CD4-positive, alpha-beta T cell (primary cell): ENCODE measurements at regions of chr6 and their contacts with region 1.

Region 1: DNA sequence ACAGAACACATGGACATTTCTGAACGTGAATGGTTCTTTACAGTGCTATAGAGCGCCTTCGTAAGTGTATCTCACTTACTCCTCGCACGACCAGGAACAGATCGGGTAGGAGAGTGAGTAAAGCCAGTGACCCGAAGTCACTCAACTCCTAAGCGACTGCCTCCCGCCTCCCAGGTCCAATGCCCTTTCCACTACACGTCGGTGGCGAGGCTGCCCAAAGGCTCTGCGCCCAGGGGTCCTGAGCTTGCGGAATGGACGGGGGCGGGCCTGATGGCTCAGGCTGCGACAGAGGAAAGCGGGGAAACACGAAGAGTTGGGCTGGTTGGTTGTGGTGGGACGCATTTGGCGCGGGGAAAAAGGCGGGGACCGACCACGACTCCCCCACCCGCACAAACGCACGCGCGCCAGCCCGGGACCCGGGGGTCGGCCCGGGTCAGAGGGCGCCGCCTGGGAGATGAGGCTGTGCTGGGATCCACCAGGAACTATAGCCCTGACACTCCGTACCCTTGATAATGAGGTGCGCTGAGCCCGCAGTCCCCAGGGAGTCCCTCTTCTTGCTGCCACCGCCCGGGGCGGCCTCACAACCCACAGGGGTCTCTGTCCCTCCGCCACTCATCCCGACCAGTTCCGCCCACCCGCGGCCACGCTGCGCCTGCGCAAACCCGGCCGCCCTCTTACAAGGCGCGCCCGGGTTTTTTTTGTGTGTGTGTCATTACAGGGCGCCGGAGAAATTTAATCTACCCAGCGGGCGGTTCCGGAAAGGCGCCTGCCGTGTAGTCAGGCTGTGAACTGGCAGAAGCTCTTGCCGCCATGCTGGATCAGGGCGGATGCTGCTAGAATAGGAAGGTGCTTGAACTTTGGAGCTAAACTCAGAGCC is at the start of gene BLOC1S5:
- DNase-seq: peak; percentile 89 to 98 (median 94)
- ATAC-seq: peak; percentile 96
- H3K4me3 ChIP-seq: peak within 1 kb of the TSS; percentile 88
- H3K4me3 Mint-ChIP-seq: peak within 1 kb of the TSS; percentile 93
- H3K27ac ChIP-seq: peak within 1 kb of the TSS; percentile 77 to 88
- H3K27ac Mint-ChIP-seq: peak within 1 kb of the TSS; percentile 90
- H3K4me1 ChIP-seq: peaks cover 20% of the 10 kb centered on the region
- H3K4me1 Mint-ChIP-seq: peaks cover 37% of the 10 kb centered on the region
- H3K27me3 ChIP-seq: no peaks in the 10 kb centered on the region
- H3K27me3 Mint-ChIP-seq: no peaks in the 10 kb centered on the region
- CTCF ChIP-seq: no peak
- total RNA-seq, gene BLOC1S5: 5.7 to 7.2 TPM

Region 2: GRCh38 chr6:7312616-7313504 is 751.1 kb before region 1 on chr6 and contains the start of gene SSR1:
- CTCF ChIA-PET with region 1: no interaction called
- POLR2A ChIA-PET with region 1: no interaction called
- intact Hi-C with region 1: loop called in 1 of 2 experiments (anchors 5 kb)
- DNase-seq: peak; percentile 77 to 96 (median 90)
- ATAC-seq: peak; percentile 95
- H3K4me3 ChIP-seq: peak within 1 kb of the TSS; percentile 94
- H3K4me3 Mint-ChIP-seq: peak within 1 kb of the TSS; percentile 95
- H3K27ac ChIP-seq: peak within 1 kb of the TSS; percentile 74 to 75
- H3K27ac Mint-ChIP-seq: peak within 1 kb of the TSS; percentile 86
- H3K4me1 ChIP-seq: peaks cover 20% of the 10 kb centered on the region
- H3K4me1 Mint-ChIP-seq: peaks cover 53% of the 10 kb centered on the region
- H3K27me3 ChIP-seq: no peaks in the 10 kb centered on the region
- H3K27me3 Mint-ChIP-seq: no peaks in the 10 kb centered on the region
- CTCF ChIP-seq: no peak
- total RNA-seq, gene SSR1: 49.6 to 55.1 TPM

Region 3: DNA sequence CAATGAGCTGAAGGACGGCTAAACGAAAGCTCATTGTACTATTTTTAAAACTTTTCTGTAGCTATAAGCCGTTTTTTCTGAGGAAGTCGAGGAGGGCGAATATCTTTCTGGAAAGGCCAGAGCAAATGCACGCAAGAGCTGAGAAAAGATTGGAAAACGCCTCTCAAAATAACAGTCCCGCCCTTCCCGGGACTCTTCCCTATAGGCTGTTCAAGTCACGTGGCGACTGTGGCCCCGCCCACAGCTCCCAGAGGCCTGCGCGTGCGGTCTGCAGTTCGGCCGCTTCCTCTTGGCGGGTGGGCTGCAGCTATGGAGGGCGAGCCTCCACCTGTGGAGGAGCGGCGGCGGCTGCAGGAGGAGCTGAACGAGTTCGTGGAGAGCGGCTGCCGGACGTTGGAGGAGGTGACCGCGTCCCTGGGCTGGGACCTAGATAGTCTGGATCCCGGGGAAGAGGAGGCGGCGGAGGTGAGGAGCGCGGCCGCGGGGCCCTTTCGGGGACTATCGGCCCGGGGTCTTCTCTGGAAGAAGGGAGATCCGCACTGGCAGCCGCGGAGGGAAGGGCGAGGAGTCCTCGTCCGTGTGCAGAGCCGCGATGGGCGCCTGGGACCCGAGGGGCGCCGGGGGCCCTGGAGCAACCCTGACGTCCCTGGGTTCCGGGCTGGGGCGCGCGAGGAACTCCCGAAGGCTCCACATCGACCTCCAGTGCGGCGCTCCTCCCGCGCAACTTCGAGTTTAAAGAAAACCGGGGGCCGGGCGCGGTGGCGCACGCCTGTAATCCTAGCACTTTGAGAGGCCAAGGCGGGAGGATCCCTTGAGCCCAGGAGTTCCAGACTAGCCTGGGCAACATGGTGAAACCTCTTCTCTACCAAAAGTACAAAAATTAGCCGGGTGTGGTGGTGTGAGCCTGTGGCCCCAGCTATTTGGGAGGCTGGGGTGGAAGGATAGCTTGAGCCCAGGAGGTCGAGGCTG is 473.8 kb before region 1 on chr6 and contains the start of gene SNRNP48:
- CTCF ChIA-PET with region 1: no interaction called
- POLR2A ChIA-PET with region 1: interaction called, 4 read pairs
- intact Hi-C with region 1: loop called in 1 of 2 experiments (anchors 10 kb)
- DNase-seq: peak; percentile 79 to 94 (median 88)
- ATAC-seq: peak; percentile 98
- H3K4me3 ChIP-seq: peak within 1 kb of the TSS; percentile 96
- H3K4me3 Mint-ChIP-seq: peak within 1 kb of the TSS; percentile 100
- H3K27ac ChIP-seq: peak within 1 kb of the TSS; percentile 38 to 45
- H3K27ac Mint-ChIP-seq: peak within 1 kb of the TSS; percentile 91
- H3K4me1 ChIP-seq: peaks cover 15% of the 10 kb centered on the region
- H3K4me1 Mint-ChIP-seq: peaks cover 48% of the 10 kb centered on the region
- H3K27me3 ChIP-seq: no peaks in the 10 kb centered on the region
- H3K27me3 Mint-ChIP-seq: no peaks in the 10 kb centered on the region
- CTCF ChIP-seq: no peak
- total RNA-seq, gene SNRNP48: 12.1 to 13.4 TPM

Region 4: DNA sequence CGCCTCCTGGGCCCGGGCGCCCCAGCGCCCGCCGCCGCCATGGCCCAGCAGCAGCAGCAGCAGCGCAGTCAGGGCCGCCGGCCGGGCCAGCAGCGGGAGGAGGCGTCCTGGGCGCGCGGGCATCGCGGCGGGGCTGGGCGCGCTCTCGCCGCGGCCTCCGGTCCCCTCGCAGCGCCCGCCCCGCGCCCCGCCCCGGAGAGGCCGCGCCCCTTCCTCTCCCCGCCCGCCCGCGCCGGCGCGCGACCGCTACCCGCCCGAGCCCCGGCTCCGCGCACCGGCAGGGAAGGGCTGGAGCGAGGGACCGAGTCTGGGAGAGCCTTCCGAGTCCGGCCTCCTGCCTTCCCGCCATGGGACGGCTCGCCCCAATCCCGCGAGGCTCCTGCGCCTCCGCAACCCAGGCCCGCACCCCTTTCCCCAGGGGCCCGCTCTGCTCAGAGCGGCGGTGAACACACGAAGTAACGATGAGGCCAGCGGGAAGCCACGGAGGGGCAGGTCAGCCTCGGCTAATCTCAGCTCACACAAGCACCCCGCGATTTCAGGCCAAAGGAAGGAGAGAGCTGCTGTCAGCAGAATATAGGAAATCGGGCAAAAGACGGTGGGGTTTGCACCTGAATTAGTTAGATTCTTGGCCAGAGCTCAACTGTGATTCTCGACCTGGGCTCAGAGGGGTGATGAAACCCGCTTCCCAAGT is 153.2 kb before region 1 on chr6 and contains the start of gene TXNDC5:
- CTCF ChIA-PET with region 1: no interaction called
- POLR2A ChIA-PET with region 1: interaction called, 3 read pairs
- intact Hi-C with region 1: loop called (anchors 2 to 5 kb)
- DNase-seq: peak; percentile 32 to 82 (median 66)
- ATAC-seq: peak; percentile 85
- H3K4me3 ChIP-seq: peak within 1 kb of the TSS; percentile 77
- H3K4me3 Mint-ChIP-seq: peak within 1 kb of the TSS; percentile 84
- H3K27ac ChIP-seq: no peak within 1 kb of the TSS
- H3K27ac Mint-ChIP-seq: no peak within 1 kb of the TSS
- H3K4me1 ChIP-seq: peaks cover 16% of the 10 kb centered on the region
- H3K4me1 Mint-ChIP-seq: no peaks in the 10 kb centered on the region
- H3K27me3 ChIP-seq: peaks cover 0 to 2% of the 10 kb centered on the region in 2 experiments
- H3K27me3 Mint-ChIP-seq: no peaks in the 10 kb centered on the region
- CTCF ChIP-seq: no peak
- total RNA-seq, gene TXNDC5: 4.2 to 7.8 TPM

Region 5: DNA sequence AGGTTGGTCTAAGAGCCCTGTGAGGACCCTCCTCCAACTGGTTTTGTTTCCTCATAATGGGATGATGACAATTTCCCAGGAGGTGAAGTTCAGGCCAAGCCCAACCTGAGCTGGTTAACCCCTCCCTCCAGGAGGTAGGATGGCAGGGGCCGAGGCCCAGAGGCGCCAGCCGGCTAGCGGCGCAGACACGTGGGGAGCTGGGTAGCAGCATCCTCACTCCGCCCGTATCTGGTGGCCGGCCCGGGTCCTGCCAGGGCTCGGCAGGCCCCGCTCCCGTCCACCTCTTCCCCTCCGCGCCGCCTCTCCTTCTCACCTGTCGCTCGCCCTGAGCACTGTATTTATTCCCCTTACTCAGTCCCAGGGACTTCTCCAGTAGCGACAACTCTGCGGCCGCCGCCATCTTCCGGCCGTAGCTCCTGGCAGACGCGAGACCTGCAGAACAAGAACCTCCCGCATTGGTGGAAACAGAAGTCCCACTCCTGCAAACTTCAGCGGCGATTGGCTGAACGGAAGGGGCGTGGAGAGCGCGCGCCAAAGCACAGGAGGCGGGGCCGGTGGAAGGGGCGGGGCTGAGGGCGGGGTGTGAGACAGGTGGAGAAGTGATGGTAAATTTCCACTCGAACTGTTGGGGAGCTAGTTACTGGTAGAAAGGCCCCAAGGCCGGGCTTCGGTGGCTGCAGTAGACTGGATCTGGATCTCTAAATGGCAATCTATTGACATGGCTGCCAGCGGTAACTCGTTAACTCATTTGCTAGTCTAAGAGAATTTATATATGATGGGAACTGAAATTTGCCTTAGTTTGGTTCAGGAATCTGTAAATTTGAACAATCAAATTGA is 38.3 kb after region 1 on chr6 and contains the start of gene EEF1E1:
- CTCF ChIA-PET with region 1: no interaction called
- POLR2A ChIA-PET with region 1: interaction called, 68 read pairs
- intact Hi-C with region 1: loop called (anchors 1 kb)
- DNase-seq: peak; percentile 93 to 99 (median 97)
- ATAC-seq: peak; percentile 97
- H3K4me3 ChIP-seq: peak within 1 kb of the TSS; percentile 89
- H3K4me3 Mint-ChIP-seq: peak within 1 kb of the TSS; percentile 96
- H3K27ac ChIP-seq: peak within 1 kb of the TSS; percentile 69 to 73
- H3K27ac Mint-ChIP-seq: peak within 1 kb of the TSS; percentile 81
- H3K4me1 ChIP-seq: peaks cover 20% of the 10 kb centered on the region
- H3K4me1 Mint-ChIP-seq: peaks cover 31% of the 10 kb centered on the region
- H3K27me3 ChIP-seq: no peaks in the 10 kb centered on the region
- H3K27me3 Mint-ChIP-seq: peaks cover 25% of the 10 kb centered on the region
- CTCF ChIP-seq: no peak
- total RNA-seq, gene EEF1E1: 11.2 to 14.7 TPM

Region 6: DNA sequence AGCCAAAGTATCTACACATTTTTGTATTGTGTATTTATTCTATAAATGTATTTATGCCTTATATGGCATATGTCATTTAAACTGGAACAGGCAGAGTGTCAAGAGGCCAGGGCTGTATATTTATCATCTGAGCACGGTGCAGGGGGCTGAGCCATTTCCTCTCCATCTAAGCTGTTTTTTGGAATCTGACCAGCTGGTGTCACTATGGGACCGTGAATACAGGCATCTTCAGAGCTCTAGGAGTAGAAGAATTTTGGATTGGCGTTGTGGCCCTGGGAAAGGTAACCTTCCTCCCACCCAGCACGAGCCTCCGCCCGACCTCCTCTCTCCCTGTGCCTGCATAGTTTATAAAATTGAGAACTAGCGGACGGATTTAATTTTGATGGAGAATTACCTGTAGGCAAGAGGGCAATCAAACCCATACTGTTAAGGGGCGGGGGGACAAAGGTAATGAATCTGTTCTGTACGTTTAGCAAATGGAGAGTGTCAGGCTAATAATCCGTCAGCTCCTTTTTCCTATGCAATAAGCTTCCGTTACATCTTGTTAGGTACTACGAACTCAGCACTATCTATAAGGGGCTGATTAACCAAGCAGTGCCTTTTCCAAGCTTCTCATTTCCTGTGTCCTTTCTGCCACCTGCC is 67.4 kb after region 1 on chr6:
- CTCF ChIA-PET with region 1: no interaction called
- POLR2A ChIA-PET with region 1: no interaction called
- intact Hi-C with region 1: no loop called
- DNase-seq: peak in 11 of 14 experiments; percentile 1 to 61 (median 6)
- ATAC-seq: peak; percentile 46
- H3K4me3 ChIP-seq: no peak overlapping the region
- H3K4me3 Mint-ChIP-seq: no peak overlapping the region
- H3K27ac ChIP-seq: no peak overlapping the region
- H3K27ac Mint-ChIP-seq: no peak overlapping the region
- H3K4me1 ChIP-seq: no peaks in the 10 kb centered on the region
- H3K4me1 Mint-ChIP-seq: no peaks in the 10 kb centered on the region
- H3K27me3 ChIP-seq: peaks cover 4 to 5% of the 10 kb centered on the region in 2 experiments
- H3K27me3 Mint-ChIP-seq: peaks cover 39% of the 10 kb centered on the region
- CTCF ChIP-seq: no peak